Activated CD4-positive, alpha-beta memory T cell treated with anti-CD3 and anti-CD28 coated beads for 36 hours (primary cell): ENCODE measurements at regions of chr5 and their contacts with region 1.

Region 1: GRCh38 chr5:170293273-170293672 is 4.3 kb downstream of the LCP2 start:
- DNase-seq: peak; percentile 78
- H3K4me3 Mint-ChIP-seq: peak overlapping the region; percentile 99
- H3K27ac Mint-ChIP-seq: peak overlapping the region; percentile 99
- H3K4me1 Mint-ChIP-seq: peaks cover 70% of the 10 kb centered on the region
- H3K27me3 Mint-ChIP-seq: no peaks in the 10 kb centered on the region

Region 2: DNA sequence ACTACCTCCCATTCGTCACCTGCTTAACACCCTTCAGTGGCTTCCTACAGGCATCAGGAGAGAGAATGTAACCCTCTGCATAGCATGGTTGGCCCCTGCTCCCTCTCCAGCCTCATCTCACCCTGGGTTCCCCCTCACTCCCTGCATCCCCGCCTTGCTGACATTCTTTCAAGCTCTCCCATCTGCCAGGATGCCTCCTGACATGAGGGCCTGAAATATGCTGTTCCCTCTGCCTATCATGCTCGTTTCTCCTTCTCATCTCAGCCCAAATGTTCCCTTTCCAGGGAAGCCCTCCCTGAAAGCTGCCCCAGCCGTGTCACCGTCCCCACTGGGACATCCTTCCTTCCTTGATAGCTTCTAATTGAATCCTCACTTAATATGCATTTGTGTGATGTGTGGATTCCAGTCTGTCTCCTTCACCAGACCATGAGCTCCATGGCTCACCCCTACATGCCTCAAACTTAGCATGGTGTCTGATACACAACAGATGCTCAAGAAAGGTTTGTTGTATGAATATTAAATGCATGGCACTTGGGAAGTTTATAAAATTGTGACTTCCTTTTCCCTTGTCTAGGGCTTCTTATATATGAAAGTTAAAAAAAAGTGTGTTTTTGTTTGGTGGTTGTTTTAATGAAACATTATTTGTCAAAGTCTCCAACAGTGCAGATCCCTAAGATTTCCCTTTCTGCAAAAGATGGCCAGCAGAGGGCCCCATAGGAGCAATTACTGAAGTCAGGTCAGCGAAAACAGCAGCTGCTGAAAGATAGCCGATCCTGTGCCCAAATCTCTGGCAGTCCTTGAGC is 67.7 kb before region 1 on chr5:
- CTCF ChIA-PET with region 1: interaction called, 14 read pairs
- POLR2A ChIA-PET with region 1: no interaction called
- intact Hi-C with region 1: no loop called
- DNase-seq: peak; percentile 81
- H3K4me3 Mint-ChIP-seq: no peak overlapping the region
- H3K27ac Mint-ChIP-seq: no peak overlapping the region
- H3K4me1 Mint-ChIP-seq: peaks cover 3% of the 10 kb centered on the region
- H3K27me3 Mint-ChIP-seq: no peaks in the 10 kb centered on the region

Region 3: DNA sequence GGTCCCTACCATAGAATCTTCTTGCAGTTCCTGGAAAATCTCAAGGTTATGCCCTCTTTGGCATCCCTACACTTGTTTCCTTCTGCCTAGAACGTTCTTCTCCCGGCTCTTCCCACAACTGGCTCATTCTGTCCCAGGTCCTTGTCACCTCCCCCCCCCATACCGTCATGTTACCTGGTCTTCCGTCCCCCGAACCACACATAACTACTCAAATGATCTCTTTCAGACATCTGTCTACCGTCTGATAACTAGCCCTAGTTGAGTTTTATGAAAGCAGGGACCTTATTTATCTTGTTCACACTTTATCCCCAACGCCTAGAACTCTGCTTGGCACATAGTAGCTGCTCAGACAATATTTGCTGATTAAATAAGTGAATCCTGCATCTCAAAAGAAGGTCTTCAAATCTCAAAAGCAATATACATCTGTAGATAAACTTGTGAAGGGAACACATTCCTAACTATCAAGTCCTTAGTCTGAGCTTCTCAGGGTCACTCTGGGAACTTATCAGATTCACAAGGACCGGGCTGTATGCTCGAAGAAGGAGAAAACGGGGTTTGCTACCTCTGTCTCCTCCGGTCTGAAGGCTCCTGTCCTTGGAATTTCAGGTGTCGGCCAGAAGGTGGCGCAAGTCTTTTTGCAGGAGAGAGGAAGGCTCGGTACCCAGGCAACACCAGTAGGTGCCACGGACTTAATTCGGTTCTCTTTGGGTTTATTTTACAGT is 25.7 kb before region 1 on chr5:
- CTCF ChIA-PET with region 1: interaction called, 137 read pairs
- POLR2A ChIA-PET with region 1: interaction called, 113 read pairs
- intact Hi-C with region 1: loop called (anchors 1 kb)
- DNase-seq: peak; percentile 87
- H3K4me3 Mint-ChIP-seq: peak overlapping the region; percentile 60
- H3K27ac Mint-ChIP-seq: peak overlapping the region; percentile 85
- H3K4me1 Mint-ChIP-seq: peaks cover 87% of the 10 kb centered on the region
- H3K27me3 Mint-ChIP-seq: no peaks in the 10 kb centered on the region

Region 4: DNA sequence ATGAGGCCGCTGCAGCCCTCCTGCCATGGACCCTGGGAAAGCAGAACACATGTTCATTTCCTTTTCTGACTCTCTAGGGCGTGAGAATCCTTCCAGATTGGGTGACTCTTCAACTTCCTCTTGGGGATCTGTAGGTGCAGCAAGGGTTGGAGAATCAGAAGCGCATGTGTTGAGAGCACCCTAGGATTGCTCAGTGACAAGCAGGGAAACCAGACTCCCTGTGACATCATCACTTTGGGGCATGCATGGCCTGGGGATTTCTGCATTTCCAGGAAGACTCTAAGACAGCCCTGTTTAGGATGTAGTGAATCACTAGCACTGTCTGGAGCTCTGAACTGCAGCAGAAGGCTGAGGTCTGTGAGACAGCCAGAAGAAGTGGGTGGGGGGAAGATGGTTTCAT is 19.4 kb after region 1 on chr5:
- CTCF ChIA-PET with region 1: interaction called, 26 read pairs
- POLR2A ChIA-PET with region 1: interaction called, 25 read pairs
- intact Hi-C with region 1: loop called (anchors 1 kb)
- DNase-seq: peak; percentile 88
- H3K4me3 Mint-ChIP-seq: peak overlapping the region; percentile 79
- H3K27ac Mint-ChIP-seq: peak overlapping the region; percentile 95
- H3K4me1 Mint-ChIP-seq: peaks cover 51% of the 10 kb centered on the region
- H3K27me3 Mint-ChIP-seq: no peaks in the 10 kb centered on the region

Region 5: DNA sequence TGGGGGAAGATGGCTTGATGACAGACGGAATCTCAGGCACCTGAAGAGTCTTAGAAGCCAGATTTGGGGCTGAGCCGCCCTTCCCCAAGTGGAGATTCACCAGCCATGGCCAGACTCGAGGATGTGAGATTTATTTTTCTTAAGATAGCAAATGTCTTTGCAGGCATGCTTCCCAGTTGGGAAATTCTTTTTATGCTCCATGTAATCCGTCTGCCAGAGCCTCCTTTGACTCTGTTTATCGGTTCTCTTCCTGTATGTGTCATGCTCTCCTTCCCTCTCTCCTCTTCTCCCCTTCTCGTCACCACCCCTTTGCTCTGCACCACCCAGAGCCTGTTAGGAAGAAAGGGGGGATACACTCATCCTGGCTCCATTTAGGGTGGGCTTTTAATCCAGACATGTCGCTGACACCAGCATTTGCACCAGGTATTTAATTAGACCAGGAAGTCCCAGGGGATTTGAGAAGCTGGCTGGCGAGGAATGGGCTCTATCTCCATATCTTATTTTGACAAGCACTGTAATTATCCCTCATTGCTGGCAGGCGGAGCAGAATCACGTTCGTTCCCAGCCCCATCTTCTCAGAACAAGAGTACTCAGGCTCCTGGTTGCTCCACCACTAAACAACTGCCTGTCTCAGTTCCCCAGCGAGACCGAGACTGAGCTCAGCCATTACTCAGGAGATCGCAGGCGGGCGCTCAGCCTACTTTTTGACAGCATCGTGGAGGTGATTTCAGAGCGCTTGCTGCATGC is 261.4 kb after region 1 on chr5:
- CTCF ChIA-PET with region 1: no interaction called
- POLR2A ChIA-PET with region 1: no interaction called
- intact Hi-C with region 1: no loop called
- DNase-seq: no peak
- H3K4me3 Mint-ChIP-seq: no peak overlapping the region
- H3K27ac Mint-ChIP-seq: no peak overlapping the region
- H3K4me1 Mint-ChIP-seq: no peaks in the 10 kb centered on the region
- H3K27me3 Mint-ChIP-seq: peaks cover 18% of the 10 kb centered on the region

Region 6: GRCh38 chr5:171387345-171387969 is 1094.2 kb after region 1 on chr5 and contains the start of gene NPM1:
- CTCF ChIA-PET with region 1: no interaction called
- POLR2A ChIA-PET with region 1: interaction called, 3 read pairs
- intact Hi-C with region 1: loop called (anchors 5 kb)
- DNase-seq: peak; percentile 98
- H3K4me3 Mint-ChIP-seq: peak within 1 kb of the TSS; percentile 93
- H3K27ac Mint-ChIP-seq: peak within 1 kb of the TSS; percentile 96
- H3K4me1 Mint-ChIP-seq: peaks cover 39% of the 10 kb centered on the region
- H3K27me3 Mint-ChIP-seq: peaks cover 3% of the 10 kb centered on the region
- total RNA-seq, gene NPM1: 2,483 to 2,592 TPM